ENCODE measurements at regions of chrX and their contacts with region 1.

Region 1: GRCh38 chrX:1468250-1468772 is 15.6 kb upstream of the ASMTL start:
- DNase-seq: peak in 1 of 6 donors; percentile 11
- ATAC-seq: peak in 1 of 4 donors; percentile 27
- H3K4me3 ChIP-seq: no peak overlapping the region
- H3K27ac ChIP-seq: no peak overlapping the region
- H3K4me1 ChIP-seq: no peaks in the 10 kb centered on the region
- H3K27me3 ChIP-seq: peaks cover 0 to 6% (median 0%) of the 10 kb centered on the region in 4 donors
- CTCF ChIP-seq: no peak

Region 2: GRCh38 chrX:1411291-1411720 is 57.0 kb before region 1 on chrX:
- intact Hi-C with region 1: no loop called
- DNase-seq: peak in 2 of 6 donors; percentile 18 to 35
- ATAC-seq: no peak
- H3K4me3 ChIP-seq: no peak overlapping the region
- H3K27ac ChIP-seq: no peak overlapping the region
- H3K4me1 ChIP-seq: no peaks in the 10 kb centered on the region
- H3K27me3 ChIP-seq: no peaks in the 10 kb centered on the region
- CTCF ChIP-seq: no peak

Region 3: DNA sequence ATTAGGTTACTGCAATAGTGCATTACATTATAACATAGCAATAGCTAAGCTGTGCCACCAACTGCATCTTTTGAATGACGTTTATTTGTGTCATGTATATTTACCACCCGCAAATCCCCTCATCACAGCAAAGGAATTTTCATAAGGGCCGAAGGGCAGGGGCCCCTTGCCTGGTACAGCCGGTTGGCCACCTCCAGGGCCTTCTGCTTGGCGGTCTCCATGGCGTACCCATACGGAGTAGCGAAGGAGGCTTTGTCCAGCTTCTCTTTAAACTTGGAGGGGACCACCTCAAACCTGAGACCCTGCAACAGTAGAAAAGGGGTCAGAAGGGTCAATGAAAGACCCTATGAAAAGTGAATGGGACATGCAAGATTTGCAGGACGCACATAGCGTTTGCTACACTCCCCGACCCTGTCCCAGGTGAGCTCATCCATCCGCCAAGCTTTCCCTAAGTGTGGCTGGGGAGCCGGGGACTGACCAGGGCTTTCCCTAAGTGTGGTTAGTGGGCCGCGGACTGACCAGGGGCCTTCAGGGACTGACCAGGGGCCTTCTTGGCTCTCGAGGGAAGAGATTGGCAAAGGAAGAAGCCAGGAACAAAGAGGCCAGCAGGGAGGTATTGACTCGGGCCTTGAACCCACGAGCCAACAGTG is 26.2 kb before region 1 on chrX:
- intact Hi-C with region 1: no loop called
- DNase-seq: peak in 3 of 6 donors; percentile 8 to 44 (median 43)
- ATAC-seq: no peak
- H3K4me3 ChIP-seq: no peak overlapping the region
- H3K27ac ChIP-seq: no peak overlapping the region
- H3K4me1 ChIP-seq: no peaks in the 10 kb centered on the region
- H3K27me3 ChIP-seq: no peaks in the 10 kb centered on the region
- CTCF ChIP-seq: no peak

Region 4: GRCh38 chrX:1576201-1576992 is 108.1 kb after region 1 on chrX:
- intact Hi-C with region 1: loop called in 1 of 3 experiments (anchors 10 kb)
- DNase-seq: no peak
- ATAC-seq: no peak
- H3K4me3 ChIP-seq: no peak overlapping the region
- H3K27ac ChIP-seq: no peak overlapping the region
- H3K4me1 ChIP-seq: no peaks in the 10 kb centered on the region
- H3K27me3 ChIP-seq: no peaks in the 10 kb centered on the region
- CTCF ChIP-seq: no peak

Measured in pancreas (tissue), 10 donors.